ENCODE measurements at regions of chr20 and their contacts with region 1.

Region 1: GRCh38 chr20:3204124-3204822 is at the start of gene DDRGK1:
- DNase-seq: peak; percentile 82 to 95 (median 91)
- ATAC-seq: peak; percentile 87
- H3K4me3 ChIP-seq: peak within 1 kb of the TSS; percentile 87 to 98
- H3K4me3 Mint-ChIP-seq: peak within 1 kb of the TSS; percentile 95
- H3K27ac ChIP-seq: peak within 1 kb of the TSS; percentile 76 to 82
- H3K27ac Mint-ChIP-seq: peak within 1 kb of the TSS; percentile 97
- H3K4me1 ChIP-seq: peaks cover 26% of the 10 kb centered on the region
- H3K4me1 Mint-ChIP-seq: peaks cover 27% of the 10 kb centered on the region
- H3K27me3 ChIP-seq: no peaks in the 10 kb centered on the region
- H3K27me3 Mint-ChIP-seq: no peaks in the 10 kb centered on the region
- CTCF ChIP-seq: no peak
- total RNA-seq, gene DDRGK1: 40.6 to 43.5 TPM

Region 2: DNA sequence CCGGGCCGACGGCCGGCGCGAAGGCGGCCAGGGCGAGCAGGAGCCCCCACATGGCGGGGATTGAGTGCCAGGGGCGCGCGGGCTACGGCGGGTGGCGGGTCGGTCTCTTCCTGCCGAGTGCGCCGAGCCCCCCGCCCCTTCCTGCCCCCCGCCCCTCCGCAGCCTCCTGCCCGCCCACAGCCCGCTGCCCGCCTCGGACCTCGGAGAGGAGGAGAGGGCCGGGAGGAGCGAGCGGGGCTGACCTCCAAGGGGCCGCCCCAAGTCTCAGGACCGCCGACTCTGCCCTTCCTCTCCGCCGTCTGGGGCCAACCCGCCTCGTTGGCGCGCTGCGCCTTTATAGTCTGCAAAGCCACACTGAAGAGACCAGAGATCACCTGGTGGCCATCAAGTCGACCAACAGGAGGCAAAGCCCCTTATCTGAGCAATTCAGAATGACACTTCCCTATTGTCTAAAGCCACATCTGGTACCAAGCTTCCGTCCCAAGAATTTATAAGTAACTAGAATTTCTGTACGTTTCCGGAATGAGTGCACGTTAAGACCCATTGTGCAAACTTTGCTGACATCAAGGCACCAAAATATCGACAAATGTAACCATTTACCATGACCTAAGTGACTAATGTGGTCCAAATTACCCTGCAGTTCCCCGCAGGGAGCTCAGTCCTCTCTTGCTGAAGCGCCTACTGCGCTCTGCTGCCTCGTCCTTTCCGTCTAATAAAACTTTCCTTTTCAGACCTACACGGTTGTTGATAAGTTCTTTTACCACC is 403.6 kb before region 1 on chr20 and contains the start of gene CPXM1:
- CTCF ChIA-PET with region 1: no interaction called
- POLR2A ChIA-PET with region 1: no interaction called
- intact Hi-C with region 1: no loop called
- DNase-seq: peak in 1 of 9 experiments; percentile 32
- ATAC-seq: peak; percentile 31
- H3K4me3 ChIP-seq: peak within 1 kb of the TSS; percentile 32 to 74
- H3K4me3 Mint-ChIP-seq: peak within 1 kb of the TSS; percentile 96
- H3K27ac ChIP-seq: no peak within 1 kb of the TSS
- H3K27ac Mint-ChIP-seq: peak within 1 kb of the TSS; percentile 39
- H3K4me1 ChIP-seq: peaks cover 22% of the 10 kb centered on the region
- H3K4me1 Mint-ChIP-seq: peaks cover 27% of the 10 kb centered on the region
- H3K27me3 ChIP-seq: peaks cover 20 to 21% of the 10 kb centered on the region in 2 experiments
- H3K27me3 Mint-ChIP-seq: peaks cover 62% of the 10 kb centered on the region
- CTCF ChIP-seq: no peak
- total RNA-seq, gene CPXM1: 0.38 to 0.50 TPM

Region 3: DNA sequence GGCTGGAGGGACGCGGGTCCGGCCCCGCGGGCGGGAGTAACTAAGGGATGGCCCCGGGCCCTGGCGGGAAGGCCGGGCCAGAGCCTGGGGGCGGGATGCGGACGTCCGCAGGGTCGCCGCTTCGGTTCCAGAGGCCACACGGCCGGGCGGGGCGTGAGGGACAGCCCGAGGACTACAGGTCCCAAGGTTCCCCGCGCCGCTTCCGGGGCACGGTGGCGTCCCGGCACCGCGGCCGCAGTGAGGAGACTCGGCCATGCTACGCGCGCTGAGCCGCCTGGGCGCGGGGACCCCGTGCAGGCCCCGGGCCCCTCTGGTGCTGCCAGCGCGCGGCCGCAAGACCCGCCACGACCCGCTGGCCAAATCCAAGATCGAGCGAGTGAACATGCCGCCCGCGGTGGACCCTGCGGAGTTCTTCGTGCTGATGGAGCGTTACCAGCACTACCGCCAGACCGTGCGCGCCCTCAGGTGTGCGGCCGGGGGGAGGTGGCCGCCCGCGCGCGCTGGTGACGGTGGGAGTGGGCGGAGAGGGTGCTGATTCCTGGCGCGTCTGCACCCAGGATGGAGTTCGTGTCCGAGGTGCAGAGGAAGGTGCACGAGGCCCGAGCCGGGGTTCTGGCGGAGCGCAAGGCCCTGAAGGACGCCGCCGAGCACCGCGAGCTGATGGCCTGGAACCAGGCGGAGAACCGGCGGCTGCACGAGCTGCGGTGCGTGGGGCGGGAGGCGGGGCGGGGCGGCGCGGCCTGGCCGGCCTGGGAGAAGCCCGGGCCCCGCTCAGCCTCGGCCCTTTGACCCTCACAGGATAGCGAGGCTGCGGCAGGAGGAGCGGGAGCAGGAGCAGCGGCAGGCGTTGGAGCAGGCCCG is 158.2 kb before region 1 on chr20 and contains the start of gene MRPS26:
- CTCF ChIA-PET with region 1: no interaction called
- POLR2A ChIA-PET with region 1: interaction called, 3 read pairs
- intact Hi-C with region 1: loop called (anchors 5 kb)
- DNase-seq: peak; percentile 48 to 87 (median 76)
- ATAC-seq: peak; percentile 85
- H3K4me3 ChIP-seq: peak within 1 kb of the TSS; percentile 72 to 95
- H3K4me3 Mint-ChIP-seq: peak within 1 kb of the TSS; percentile 82
- H3K27ac ChIP-seq: peak within 1 kb of the TSS; percentile 66 to 71
- H3K27ac Mint-ChIP-seq: peak within 1 kb of the TSS; percentile 76
- H3K4me1 ChIP-seq: peaks cover 15% of the 10 kb centered on the region
- H3K4me1 Mint-ChIP-seq: peaks cover 19% of the 10 kb centered on the region
- H3K27me3 ChIP-seq: no peaks in the 10 kb centered on the region
- H3K27me3 Mint-ChIP-seq: no peaks in the 10 kb centered on the region
- CTCF ChIP-seq: no peak
- total RNA-seq, gene MRPS26: 16.5 to 19.5 TPM

Region 4: DNA sequence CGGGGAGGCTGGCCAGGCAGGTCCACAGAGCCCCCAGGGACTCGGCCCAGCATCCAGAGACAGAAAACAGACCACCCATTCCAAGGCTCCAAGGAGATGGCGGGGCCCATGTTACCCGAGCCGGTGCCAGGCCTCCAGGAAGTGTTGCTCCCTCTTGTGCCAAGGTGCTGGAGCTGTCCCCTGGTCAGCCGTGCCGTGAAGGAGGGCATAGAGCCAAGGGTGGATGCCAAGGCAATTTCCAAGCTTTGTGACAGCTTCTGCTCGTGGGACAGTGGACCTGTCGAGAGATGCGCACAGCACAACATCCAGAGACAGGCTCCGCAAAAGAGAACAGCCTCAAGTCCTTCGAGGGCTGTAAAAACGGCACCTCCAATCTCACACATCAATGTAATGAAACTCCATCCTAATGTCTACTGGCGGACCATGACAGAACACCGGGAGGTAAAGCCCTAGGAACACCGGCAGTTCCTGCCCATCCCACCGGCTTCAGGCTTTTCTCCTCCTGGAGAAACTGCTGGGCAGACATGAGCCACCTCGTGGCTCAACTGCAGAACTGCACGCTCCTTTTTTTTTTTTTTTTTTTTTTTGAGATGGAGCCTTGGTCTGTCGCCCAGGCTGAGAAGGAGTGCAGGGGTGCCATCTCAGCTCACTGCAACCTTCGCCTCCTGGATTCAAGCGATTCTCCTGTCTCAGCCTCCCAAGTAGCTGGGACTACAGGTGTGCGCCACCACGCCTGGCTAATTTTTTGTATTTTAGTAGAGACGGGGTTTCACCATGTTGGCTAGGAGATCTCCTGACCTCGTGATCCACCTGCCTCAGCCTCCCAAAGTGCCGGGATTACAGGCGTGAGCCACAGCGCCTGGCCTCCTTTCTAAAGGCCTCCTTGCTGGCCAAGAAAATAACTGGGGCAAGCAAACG is 88.8 kb before region 1 on chr20:
- CTCF ChIA-PET with region 1: interaction called, 6 read pairs
- POLR2A ChIA-PET with region 1: interaction called, 4 read pairs
- intact Hi-C with region 1: loop called (anchors 5 kb)
- DNase-seq: peak in 5 of 9 experiments; percentile 18 to 70 (median 60)
- ATAC-seq: peak; percentile 77
- H3K4me3 ChIP-seq: no peak overlapping the region
- H3K4me3 Mint-ChIP-seq: no peak overlapping the region
- H3K27ac ChIP-seq: no peak overlapping the region
- H3K27ac Mint-ChIP-seq: peak overlapping the region; percentile 69
- H3K4me1 ChIP-seq: peaks cover 7% of the 10 kb centered on the region
- H3K4me1 Mint-ChIP-seq: peaks cover 23% of the 10 kb centered on the region
- H3K27me3 ChIP-seq: no peaks in the 10 kb centered on the region
- H3K27me3 Mint-ChIP-seq: no peaks in the 10 kb centered on the region
- CTCF ChIP-seq: peak; percentile 95

Region 5: DNA sequence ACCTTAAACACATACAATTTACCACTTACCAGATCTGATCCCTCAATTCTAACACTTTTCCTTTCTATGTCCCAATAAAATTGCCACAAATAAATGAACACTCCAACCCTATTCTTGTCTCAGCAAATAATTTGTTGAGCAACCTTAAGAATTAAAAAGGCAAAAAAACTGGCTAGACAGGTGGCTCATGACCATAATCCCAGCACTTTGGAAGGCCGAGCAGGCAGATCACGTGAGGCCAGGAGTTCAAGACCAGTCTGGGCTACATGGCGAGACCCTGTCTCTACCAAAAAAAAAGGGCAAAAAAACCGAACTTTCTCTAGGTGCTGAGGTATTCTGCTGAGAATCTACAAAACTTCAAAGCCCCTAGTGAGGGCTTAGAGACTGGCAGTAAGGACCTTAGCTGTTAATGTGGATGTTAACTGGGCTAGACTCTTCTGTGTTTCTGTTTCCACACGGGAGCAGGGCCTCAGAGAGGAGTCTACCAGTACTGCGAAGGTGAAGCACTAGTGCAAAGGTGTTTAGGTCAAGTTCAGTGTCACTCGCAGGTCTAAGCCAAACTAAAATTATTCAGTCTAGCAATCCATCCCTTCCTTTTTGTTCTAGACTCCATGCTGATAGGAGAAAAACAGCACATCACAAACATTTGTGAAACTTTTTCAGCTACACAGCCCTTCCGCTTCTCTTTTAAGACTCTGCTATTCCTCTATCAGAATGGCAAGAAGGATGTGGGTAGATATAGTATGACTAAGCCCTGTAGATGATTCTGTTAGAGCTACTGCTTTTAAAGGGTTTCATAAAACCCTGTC is 47.3 kb before region 1 on chr20:
- CTCF ChIA-PET with region 1: no interaction called
- POLR2A ChIA-PET with region 1: interaction called, 3 read pairs
- intact Hi-C with region 1: loop called (anchors 1 to 5 kb)
- DNase-seq: peak in 1 of 9 experiments; percentile 60
- ATAC-seq: peak; percentile 80
- H3K4me3 ChIP-seq: peak overlapping the region in 1 of 2 experiments; percentile 12
- H3K4me3 Mint-ChIP-seq: peak overlapping the region; percentile 60
- H3K27ac ChIP-seq: peak overlapping the region in 1 of 2 experiments; percentile 58
- H3K27ac Mint-ChIP-seq: peak overlapping the region; percentile 90
- H3K4me1 ChIP-seq: peaks cover 43% of the 10 kb centered on the region
- H3K4me1 Mint-ChIP-seq: peaks cover 60% of the 10 kb centered on the region
- H3K27me3 ChIP-seq: no peaks in the 10 kb centered on the region
- H3K27me3 Mint-ChIP-seq: no peaks in the 10 kb centered on the region
- CTCF ChIP-seq: no peak

Region 6: GRCh38 chr20:3218307-3218988 is 14.2 kb after region 1 on chr20:
- CTCF ChIA-PET with region 1: interaction called, 10 read pairs
- POLR2A ChIA-PET with region 1: interaction called, 5 read pairs
- intact Hi-C with region 1: no loop called
- DNase-seq: peak; percentile 63 to 85 (median 72)
- ATAC-seq: peak; percentile 84
- H3K4me3 ChIP-seq: no peak overlapping the region
- H3K4me3 Mint-ChIP-seq: no peak overlapping the region
- H3K27ac ChIP-seq: no peak overlapping the region
- H3K27ac Mint-ChIP-seq: no peak overlapping the region
- H3K4me1 ChIP-seq: peaks cover 19% of the 10 kb centered on the region
- H3K4me1 Mint-ChIP-seq: peaks cover 19% of the 10 kb centered on the region
- H3K27me3 ChIP-seq: no peaks in the 10 kb centered on the region
- H3K27me3 Mint-ChIP-seq: no peaks in the 10 kb centered on the region
- CTCF ChIP-seq: peak; percentile 88

Region 7: DNA sequence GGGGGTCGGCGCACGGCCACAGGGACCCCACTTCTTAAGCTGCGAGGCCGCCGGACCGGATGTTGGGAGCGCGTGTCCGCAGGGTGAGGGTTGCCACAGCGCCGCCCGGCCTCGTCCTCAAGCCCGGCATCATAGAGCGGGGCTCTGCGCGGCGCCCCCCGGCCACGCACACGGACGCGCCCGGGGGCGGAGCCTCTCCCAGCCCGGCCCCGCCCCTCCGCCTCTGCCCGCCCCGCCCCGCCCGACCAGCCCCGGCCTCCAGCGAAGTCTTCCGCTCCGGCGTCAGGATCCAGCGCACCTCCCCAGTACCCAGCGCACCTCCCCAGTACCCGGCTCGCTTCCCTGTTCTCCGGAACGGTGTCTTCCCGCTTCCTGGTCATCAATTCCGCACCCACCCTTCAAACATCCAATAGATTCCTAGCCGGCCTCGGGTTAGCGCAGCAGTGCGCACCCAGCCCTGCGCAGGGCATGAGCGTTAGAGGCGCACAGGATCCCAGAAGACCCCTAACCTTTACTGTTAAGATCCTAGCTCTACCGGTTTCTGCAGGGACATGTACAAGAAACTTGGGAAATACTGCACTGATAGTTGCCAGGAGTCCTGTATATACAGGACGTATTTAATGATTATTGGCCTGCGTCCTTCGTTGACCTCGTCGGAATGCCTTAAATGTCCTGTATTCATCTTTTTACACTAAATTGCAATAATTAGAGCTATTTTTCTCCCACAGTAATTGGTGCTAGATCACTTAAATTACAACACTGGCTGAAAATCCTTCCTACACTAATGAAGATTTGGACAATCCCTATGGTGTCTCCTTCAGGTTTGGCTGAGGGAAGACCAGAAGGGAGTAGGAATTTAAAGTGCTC is 203.7 kb after region 1 on chr20:
- CTCF ChIA-PET with region 1: no interaction called
- POLR2A ChIA-PET with region 1: no interaction called
- intact Hi-C with region 1: loop called in 1 of 2 experiments (anchors 10 kb)
- DNase-seq: peak; percentile 40 to 87 (median 69)
- ATAC-seq: peak; percentile 67
- H3K4me3 ChIP-seq: peak overlapping the region; percentile 74 to 86
- H3K4me3 Mint-ChIP-seq: peak overlapping the region; percentile 99
- H3K27ac ChIP-seq: peak overlapping the region; percentile 53 to 59
- H3K27ac Mint-ChIP-seq: peak overlapping the region; percentile 94
- H3K4me1 ChIP-seq: peaks cover 6% of the 10 kb centered on the region
- H3K4me1 Mint-ChIP-seq: peaks cover 25% of the 10 kb centered on the region
- H3K27me3 ChIP-seq: peaks cover 0 to 1% of the 10 kb centered on the region in 2 experiments
- H3K27me3 Mint-ChIP-seq: no peaks in the 10 kb centered on the region
- CTCF ChIP-seq: no peak

Region 8: DNA sequence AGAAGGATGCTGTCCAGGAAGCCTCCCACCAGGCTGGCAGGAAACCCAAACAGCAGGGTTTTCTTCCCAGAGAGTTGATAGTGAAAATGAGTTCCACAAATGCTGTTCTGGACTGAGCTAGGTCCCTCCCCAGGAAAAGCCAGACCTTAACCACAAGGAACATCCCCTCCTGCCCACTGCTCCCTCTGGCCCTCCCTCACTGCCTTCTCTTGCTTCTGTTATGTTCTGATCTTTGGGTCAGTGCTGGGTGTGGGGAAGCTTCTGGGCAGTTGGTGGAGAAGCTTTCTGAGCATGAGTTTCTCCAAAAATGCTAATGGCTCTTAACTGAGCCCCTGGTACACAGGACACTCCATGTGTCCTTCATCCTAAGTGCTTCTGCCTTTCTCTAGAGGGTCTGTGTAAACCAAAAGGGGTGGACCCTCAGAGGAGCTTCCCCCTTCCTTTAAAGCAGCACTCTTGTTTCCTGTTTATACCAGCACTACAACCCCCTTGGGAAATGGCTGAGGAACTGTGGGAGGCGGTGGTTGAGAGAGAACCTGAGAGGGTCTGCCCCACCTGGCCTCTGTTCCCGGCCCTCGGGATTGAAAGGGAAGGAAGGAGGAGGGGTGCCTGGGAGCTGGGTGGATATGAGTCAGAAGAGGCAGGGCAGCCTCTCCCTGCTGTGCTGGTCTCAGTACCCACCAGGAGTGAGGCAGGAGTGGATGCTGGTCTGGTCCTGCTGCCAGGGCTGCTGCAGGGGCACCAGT is 1964.6 kb after region 1 on chr20:
- CTCF ChIA-PET with region 1: no interaction called
- POLR2A ChIA-PET with region 1: no interaction called
- intact Hi-C with region 1: no loop called
- DNase-seq: no peak
- ATAC-seq: no peak
- H3K4me3 ChIP-seq: no peak overlapping the region
- H3K4me3 Mint-ChIP-seq: peak overlapping the region; percentile 62
- H3K27ac ChIP-seq: peak overlapping the region; percentile 19 to 24
- H3K27ac Mint-ChIP-seq: peak overlapping the region; percentile 74
- H3K4me1 ChIP-seq: peaks cover 28% of the 10 kb centered on the region
- H3K4me1 Mint-ChIP-seq: peaks cover 79% of the 10 kb centered on the region
- H3K27me3 ChIP-seq: no peaks in the 10 kb centered on the region
- H3K27me3 Mint-ChIP-seq: no peaks in the 10 kb centered on the region
- CTCF ChIP-seq: no peak

Measured in CD8-positive, alpha-beta T cell (primary cell).